ENCODE measurements at regions of chr2 and their contacts with region 1.

Region 1: GRCh38 chr2:9813312-9814133 is 29.8 kb upstream of the TAF1B start:
- DNase-seq: no peak
- H3K4me3 ChIP-seq: no peak overlapping the region
- H3K27ac ChIP-seq: no peak overlapping the region
- H3K27me3 ChIP-seq: peaks cover 4% of the 10 kb centered on the region
- CTCF ChIP-seq: peak; percentile 92

Region 2: DNA sequence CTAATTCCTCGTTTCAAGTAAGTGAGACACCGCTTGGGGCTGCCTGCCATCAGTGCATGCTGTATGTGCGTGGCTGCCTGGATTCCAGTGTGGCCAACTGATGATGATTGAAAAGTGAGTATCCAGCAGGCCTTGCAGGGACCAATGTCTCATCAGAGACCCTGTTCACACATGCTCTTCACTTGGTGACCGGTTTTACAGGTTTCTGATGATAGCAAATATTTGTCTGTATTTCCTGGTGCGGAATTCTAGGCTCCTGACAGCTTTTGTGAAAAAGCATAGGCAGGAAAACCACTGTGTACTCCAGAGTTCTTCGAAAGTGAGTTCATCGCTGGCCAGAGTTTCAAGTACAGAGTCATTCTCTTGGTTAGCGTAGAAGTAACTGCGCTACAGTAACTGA is 168.9 kb before region 1 on chr2:
- CTCF ChIA-PET with region 1: no interaction called
- POLR2A ChIA-PET with region 1: no interaction called
- DNase-seq: no peak
- H3K4me3 ChIP-seq: no peak overlapping the region
- H3K27ac ChIP-seq: no peak overlapping the region
- H3K27me3 ChIP-seq: no peaks in the 10 kb centered on the region
- CTCF ChIP-seq: no peak

Region 3: GRCh38 chr2:9770308-9771100 is 43.0 kb before region 1 on chr2:
- CTCF ChIA-PET with region 1: interaction called, 13 read pairs
- POLR2A ChIA-PET with region 1: no interaction called
- DNase-seq: peak; percentile 26
- H3K4me3 ChIP-seq: peak overlapping the region; percentile 10; the same call in 1 of the 2 replicates
- H3K27ac ChIP-seq: peak overlapping the region; percentile 21
- H3K27me3 ChIP-seq: no peaks in the 10 kb centered on the region
- CTCF ChIP-seq: peak; percentile 78

Region 4: DNA sequence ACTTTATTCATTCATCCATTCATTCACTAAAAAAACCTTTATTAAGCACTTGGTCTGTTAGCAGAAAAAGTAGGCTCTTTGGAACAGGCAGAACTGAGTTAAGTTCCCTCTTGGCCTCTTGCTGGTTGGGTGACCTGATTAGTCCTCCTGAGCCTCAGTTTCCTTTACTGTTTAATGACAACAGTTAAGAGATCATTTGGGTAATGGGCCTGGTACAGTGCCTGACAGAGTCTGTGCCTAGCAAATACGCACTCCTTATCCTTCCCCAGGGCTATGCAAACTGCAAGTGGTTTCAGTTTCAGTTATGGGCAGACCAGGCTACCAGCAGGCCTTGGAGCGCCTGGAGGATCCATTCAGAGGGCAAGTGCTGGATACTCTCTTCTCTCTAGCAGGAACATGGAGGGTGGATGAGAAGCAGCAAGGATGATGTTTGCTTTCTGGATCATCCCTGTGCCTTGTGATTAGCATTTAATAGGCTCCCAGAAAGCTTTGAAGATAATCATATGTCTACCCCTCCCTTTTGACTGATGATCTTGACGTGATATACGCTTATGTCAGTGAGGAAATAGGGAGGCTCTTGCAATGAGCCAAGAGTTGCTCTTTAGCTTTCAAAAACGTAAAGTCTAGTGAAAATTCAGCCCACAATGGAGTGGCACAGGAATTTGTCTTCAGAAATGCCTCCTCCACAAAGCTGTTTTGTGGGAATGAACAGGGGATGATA is 17.3 kb after region 1 on chr2:
- CTCF ChIA-PET with region 1: interaction called, 19 read pairs
- POLR2A ChIA-PET with region 1: no interaction called
- DNase-seq: no peak
- H3K4me3 ChIP-seq: no peak overlapping the region
- H3K27ac ChIP-seq: no peak overlapping the region
- H3K27me3 ChIP-seq: no peaks in the 10 kb centered on the region
- CTCF ChIP-seq: no peak

Region 5: DNA sequence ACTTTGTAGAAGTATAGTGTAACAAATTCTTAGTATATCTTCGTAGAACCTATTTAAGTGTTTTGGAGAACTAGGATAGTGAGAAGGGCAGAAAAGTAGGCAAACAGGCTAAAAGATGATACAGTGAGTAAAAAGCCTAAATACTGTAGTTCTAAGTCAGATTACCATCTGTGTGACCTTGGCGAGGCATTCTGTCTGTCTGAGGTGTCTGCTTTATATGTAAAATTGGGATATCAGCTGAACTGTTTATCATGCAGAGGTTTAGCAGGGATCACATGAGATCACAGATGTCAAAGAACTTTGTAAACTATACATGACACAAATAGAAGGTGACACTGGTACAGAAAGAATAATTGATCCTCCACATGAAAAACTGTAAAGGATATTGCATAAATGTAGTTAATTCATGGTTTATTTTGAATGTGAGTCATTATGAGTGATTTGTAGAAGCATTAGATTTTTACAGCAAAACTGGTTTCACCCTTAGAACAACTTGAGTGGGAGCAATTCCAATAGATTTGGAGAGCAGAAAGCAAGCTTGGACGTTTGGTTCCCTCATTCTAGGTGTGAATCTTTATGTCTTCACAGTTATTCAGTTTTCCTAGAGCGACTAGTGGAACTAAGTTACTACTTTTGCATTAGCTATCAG is 71.6 kb after region 1 on chr2:
- CTCF ChIA-PET with region 1: interaction called, 11 read pairs
- POLR2A ChIA-PET with region 1: interaction called, 4 read pairs
- DNase-seq: no peak
- H3K4me3 ChIP-seq: no peak overlapping the region
- H3K27ac ChIP-seq: no peak overlapping the region
- H3K27me3 ChIP-seq: no peaks in the 10 kb centered on the region
- CTCF ChIP-seq: no peak

Region 6: GRCh38 chr2:9984217-9984739 is 170.8 kb after region 1 on chr2:
- CTCF ChIA-PET with region 1: interaction called, 12 read pairs
- POLR2A ChIA-PET with region 1: interaction called, 3 read pairs
- DNase-seq: no peak
- H3K4me3 ChIP-seq: no peak overlapping the region
- H3K27ac ChIP-seq: no peak overlapping the region
- H3K27me3 ChIP-seq: no peaks in the 10 kb centered on the region
- CTCF ChIP-seq: peak; percentile 65

Region 7: GRCh38 chr2:10036095-10036884 is 222.8 kb after region 1 on chr2:
- CTCF ChIA-PET with region 1: interaction called, 10 read pairs
- POLR2A ChIA-PET with region 1: no interaction called
- DNase-seq: no peak
- H3K4me3 ChIP-seq: no peak overlapping the region
- H3K27ac ChIP-seq: no peak overlapping the region
- H3K27me3 ChIP-seq: no peaks in the 10 kb centered on the region
- CTCF ChIP-seq: peak; percentile 56

Region 8: DNA sequence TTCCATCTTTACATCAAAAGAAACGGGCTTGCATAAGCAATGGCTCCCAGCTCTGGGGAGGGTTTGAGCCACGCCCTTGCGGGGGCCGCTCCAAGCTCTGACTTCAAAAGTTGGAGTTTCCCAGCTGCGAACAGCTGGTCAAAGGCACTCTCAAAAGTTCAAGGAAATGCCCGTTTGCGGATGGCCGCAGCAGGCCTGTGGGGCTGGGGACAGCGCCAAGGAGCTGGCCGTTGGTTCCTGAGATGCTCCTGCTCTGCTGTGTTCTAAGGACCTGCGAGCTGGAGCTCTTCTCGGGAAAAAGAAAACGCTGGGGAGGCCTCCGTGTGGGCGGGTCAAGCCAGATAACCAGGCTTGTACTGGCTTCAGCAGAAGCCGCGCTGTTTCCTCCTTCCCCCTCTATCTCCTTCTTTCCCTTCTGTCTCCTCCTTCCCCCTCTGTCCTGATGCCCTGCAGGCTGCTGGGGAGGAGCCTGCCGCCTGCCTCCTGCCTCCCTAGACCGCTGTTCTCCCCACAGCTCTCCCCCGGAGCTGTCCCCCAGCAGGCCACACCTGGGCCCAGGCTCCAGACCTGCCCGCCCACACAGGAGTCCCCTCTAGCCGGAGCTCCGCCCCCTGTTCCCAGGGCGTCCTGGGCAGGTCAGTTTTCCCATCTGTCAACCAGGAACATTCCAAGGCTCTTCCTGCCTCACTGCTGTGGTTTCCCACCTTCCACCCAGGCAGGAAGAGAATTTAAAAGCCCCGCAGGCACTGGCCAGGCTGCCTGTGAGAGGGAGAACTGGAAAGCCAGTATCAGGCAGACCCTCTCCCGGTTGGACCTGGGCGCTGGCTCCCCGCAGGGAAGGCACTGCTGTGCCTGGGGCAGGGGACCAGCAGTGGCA is 243.9 kb after region 1 on chr2:
- CTCF ChIA-PET with region 1: interaction called, 18 read pairs
- POLR2A ChIA-PET with region 1: no interaction called
- DNase-seq: peak; percentile 62
- H3K4me3 ChIP-seq: peak overlapping the region; percentile 39
- H3K27ac ChIP-seq: peak overlapping the region; percentile 94
- H3K27me3 ChIP-seq: peaks cover 9% of the 10 kb centered on the region
- CTCF ChIP-seq: no peak

Measured in AG04450 (cell line).